IMR-90 (cell line): ENCODE measurements at regions of chr5 and their contacts with region 1.

Region 1: DNA sequence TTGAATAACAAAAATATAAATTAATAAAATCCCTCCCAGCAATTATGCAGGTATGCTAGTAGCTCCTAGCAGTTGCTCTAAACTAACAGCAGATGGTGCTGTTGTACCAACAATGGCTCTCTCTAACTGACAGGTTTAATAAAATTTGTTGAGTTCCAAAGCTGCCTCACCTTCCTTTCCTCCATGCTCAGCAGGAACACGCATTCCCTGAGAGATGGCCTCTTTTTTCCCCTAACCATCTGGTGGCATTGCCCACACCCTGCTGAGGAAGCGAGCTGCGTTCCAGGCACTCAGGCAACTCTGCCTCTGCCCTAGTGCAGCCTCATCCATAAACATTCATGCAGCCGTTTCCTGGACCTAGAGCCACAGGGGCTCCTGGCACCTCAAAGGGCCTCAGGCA is 106.2 kb downstream of the KLHL3 start:
- DNase-seq: peak; percentile 63
- ATAC-seq: peak; percentile 91
- H3K4me3 ChIP-seq: no peak overlapping the region
- H3K27ac ChIP-seq: no peak overlapping the region
- H3K4me1 ChIP-seq: no peaks in the 10 kb centered on the region; the same call in 1 of the 2 replicates
- H3K27me3 ChIP-seq: no peaks in the 10 kb centered on the region
- CTCF ChIP-seq: peak; percentile 95
- POLR2A ChIP-seq: no peak; the same call in 1 of the 2 replicates
- RAD21 ChIP-seq: peak; percentile 96

Region 2: DNA sequence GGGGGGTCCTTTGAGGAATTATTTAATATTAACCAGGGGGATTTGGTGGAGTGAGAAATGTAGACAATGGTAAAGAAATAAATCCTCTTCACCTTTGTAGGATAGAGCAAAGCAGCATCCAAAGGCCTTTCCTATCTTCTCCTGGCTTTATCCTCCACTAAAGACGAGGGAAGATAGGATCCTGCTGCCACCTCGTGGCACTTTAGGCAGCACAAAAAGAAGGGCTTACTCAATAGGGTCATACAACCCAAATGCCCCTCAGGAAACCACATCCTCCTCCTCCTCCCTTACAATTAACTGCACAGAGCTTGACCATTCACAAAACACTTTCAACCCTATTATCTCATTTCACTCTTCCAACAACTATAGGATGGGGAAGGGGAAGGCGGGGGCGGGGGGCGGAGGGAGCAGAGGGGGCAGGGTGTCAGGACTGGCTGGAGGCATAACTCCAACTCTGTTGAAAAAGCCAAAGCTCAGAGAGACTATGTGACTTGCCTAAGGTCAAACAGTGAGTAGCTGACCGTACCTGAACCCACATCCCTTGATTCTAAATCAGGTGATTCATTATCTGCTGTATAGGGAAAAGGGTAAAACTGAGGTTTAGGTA is 192.6 kb after region 1 on chr5:
- CTCF ChIA-PET with region 1: no interaction called
- POLR2A ChIA-PET with region 1: no interaction called
- dilution Hi-C with region 1: no loop called
- in situ Hi-C with region 1: no loop called
- intact Hi-C with region 1: loop called (anchors 5 kb)
- DNase-seq: peak; percentile 18
- ATAC-seq: peak; percentile 57
- H3K4me3 ChIP-seq: no peak overlapping the region
- H3K27ac ChIP-seq: no peak overlapping the region
- H3K4me1 ChIP-seq: no peaks in the 10 kb centered on the region
- H3K27me3 ChIP-seq: peaks cover 6% of the 10 kb centered on the region
- CTCF ChIP-seq: peak; percentile 45
- POLR2A ChIP-seq: no peak
- RAD21 ChIP-seq: peak; percentile 51

Region 3: DNA sequence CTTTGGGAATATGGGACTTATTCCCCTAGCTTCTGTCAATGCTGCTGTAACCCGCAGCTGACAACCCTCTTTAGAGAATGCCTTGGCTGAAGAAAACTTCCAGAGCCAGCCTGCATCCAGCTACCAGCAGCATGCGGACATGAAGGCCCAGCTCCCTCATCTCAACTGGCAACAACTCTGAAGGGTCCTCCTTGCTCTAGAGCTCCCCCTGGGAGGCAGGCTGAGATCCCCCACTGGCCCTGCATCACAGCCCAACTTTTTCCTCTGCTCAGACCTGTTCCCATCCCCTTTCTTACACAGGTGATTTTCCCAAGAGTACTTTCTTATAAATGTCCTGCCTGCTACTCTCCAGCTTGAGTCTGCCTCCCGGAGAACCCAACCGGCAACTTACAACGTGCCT is 435.5 kb after region 1 on chr5:
- CTCF ChIA-PET with region 1: interaction called, 7 read pairs
- POLR2A ChIA-PET with region 1: no interaction called
- dilution Hi-C with region 1: no loop called
- in situ Hi-C with region 1: loop called (anchors 25 kb)
- intact Hi-C with region 1: no loop called
- DNase-seq: no peak
- ATAC-seq: no peak
- H3K4me3 ChIP-seq: no peak overlapping the region
- H3K27ac ChIP-seq: no peak overlapping the region
- H3K4me1 ChIP-seq: no peaks in the 10 kb centered on the region
- H3K27me3 ChIP-seq: no peaks in the 10 kb centered on the region; the same call in 1 of the 2 replicates
- CTCF ChIP-seq: peak; percentile 22; the same call in 1 of the 2 replicates
- POLR2A ChIP-seq: no peak
- RAD21 ChIP-seq: no peak

Region 4: GRCh38 chr5:138077065-138077696 is 447.5 kb after region 1 on chr5:
- CTCF ChIA-PET with region 1: no interaction called
- POLR2A ChIA-PET with region 1: no interaction called
- dilution Hi-C with region 1: no loop called
- in situ Hi-C with region 1: loop called (anchors 25 kb)
- intact Hi-C with region 1: loop called (anchors 5 kb)
- DNase-seq: peak; percentile 65
- ATAC-seq: peak; percentile 96
- H3K4me3 ChIP-seq: no peak overlapping the region
- H3K27ac ChIP-seq: no peak overlapping the region
- H3K4me1 ChIP-seq: no peaks in the 10 kb centered on the region
- H3K27me3 ChIP-seq: no peaks in the 10 kb centered on the region
- CTCF ChIP-seq: peak; percentile 86
- POLR2A ChIP-seq: no peak
- RAD21 ChIP-seq: peak; percentile 80

Region 5: DNA sequence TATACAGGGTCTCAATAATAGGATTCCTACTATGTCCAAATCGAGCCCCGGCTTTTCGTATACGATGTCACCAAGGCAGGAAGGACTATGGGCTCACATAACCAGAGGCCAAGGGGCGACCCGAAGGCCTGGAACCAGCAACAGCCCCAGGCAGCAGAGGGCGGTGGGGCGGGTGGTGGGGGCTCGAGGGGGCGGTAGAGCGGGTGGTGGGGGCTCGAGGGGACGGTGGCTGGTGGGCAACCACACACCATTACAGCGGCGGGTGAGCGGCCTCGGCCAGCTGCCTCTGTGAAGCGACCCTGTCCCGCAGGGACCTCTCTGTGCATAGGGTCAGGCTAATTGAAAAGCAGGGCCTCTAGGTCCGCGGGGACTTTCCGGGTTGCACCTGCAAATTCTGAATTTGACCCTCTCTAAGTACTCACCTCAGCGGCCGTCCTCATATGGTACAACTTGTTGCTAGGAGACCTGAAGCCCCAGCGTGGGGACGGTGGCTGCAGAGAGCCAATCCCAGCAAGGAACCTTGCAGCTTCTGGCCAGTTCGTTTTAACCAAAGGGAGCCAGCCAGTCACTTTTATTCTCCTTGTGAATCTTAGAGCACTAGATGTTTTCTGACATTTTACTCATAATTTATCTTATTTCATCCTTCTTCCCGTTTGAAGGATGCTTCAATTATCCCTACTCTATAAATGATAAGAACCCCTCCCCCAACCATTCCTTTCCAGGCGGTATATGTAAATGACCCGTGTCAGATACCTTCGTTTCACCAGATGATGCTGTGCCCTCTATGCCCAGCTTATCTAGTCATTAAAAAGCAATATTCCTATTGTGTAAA is 509.5 kb after region 1 on chr5 and contains the start of gene NME5:
- CTCF ChIA-PET with region 1: no interaction called
- POLR2A ChIA-PET with region 1: no interaction called
- dilution Hi-C with region 1: no loop called
- in situ Hi-C with region 1: loop called (anchors 25 kb)
- intact Hi-C with region 1: no loop called
- DNase-seq: peak; percentile 40
- ATAC-seq: peak; percentile 88
- H3K4me3 ChIP-seq: peak within 1 kb of the TSS; percentile 41
- H3K27ac ChIP-seq: no peak within 1 kb of the TSS
- H3K4me1 ChIP-seq: no peaks in the 10 kb centered on the region
- H3K27me3 ChIP-seq: no peaks in the 10 kb centered on the region; the same call in 1 of the 2 replicates
- CTCF ChIP-seq: no peak
- POLR2A ChIP-seq: no peak
- RAD21 ChIP-seq: no peak
- total RNA-seq, gene NME5: under 0.01 and 0.18 TPM in 2 replicates